ENCODE measurements at regions of chr11 and their contacts with region 1.

Region 1: DNA sequence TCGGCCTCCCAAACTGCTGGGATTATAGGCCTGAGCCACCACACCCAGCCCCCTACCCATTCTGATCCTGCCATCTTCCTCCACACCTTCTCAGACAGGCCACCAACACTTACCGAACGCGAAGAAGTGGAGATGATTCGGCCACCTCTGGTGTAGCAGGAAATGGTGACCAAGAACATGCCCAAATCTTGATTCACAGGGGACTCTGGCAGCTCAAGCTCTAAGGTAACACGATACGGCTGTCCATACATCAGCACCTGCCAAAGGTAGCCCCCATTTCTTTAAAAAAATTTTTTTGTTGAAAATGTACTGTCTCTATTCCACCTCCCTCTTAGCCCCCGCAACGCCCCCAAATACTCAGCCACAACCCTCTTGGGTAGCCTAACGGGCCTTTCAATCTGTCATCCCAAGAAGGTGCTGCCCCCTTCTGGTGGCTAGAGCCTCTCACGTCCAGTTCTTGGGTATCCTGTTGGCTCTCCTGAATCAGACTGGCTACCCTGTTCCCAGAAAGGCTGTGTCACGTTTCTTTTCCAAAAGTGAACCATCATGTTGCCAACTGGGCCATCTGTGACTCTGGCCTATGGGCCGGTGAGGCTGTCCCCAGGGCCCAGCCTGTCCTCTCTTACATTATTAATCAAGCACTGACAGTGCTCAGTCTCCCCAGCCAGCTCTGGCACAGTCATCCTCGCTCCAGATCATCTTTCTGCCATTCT is 5.3 kb upstream of the LRRN4CL start:
- DNase-seq: peak; percentile 62 to 91 (median 78)
- ATAC-seq: peak; percentile 92
- H3K4me3 ChIP-seq: no peak overlapping the region
- H3K4me1 ChIP-seq: no peaks in the 10 kb centered on the region
- CTCF ChIP-seq: peak; percentile 65

Region 2: DNA sequence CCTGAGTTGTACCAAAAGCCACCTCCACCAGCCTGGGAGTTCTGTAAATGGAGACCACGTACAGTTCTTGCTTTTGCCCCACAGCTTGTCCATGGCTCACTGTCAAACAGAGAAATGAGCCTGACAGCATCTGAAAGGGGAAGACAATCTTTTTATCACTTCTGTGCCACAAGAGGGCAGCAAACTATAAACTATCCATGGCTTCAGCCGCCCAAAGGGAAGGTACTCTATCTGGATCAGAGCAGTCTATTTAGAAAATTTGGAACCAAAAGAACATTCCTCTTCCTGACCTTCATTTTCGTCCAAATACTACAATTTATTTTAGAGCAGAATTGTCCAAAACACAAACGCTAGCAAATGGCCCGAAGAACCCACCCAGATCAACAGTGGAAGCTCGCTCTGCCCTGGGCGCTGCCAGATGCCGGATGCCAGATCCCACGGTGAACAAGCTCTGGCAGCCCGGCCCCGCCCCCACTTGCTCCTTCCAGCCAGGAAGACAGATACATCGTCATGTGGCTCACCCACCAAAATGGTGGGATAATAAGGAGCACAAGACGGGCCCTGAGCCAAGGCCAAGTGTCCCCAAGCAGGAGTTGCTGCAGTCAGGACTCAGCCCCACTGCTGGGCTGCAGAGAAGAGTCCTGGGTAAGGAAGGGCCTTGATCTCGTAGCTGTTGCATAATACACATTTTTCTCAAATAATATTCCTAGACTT is 299.6 kb before region 1 on chr11:
- intact Hi-C with region 1: loop called (anchors 10 kb)
- DNase-seq: peak; percentile 71 to 77 (median 76)
- ATAC-seq: peak; percentile 86
- H3K4me3 ChIP-seq: no peak overlapping the region
- H3K4me1 ChIP-seq: peaks cover 13% of the 10 kb centered on the region
- CTCF ChIP-seq: peak; percentile 31